ENCODE measurements at regions of chr13 and their contacts with region 1.

Region 1: GRCh38 chr13:94674609-94675348 is 37.6 kb downstream of the SOX21 start:
- DNase-seq: peak in 3 of 5 donors; percentile 9 to 27 (median 22)
- ATAC-seq: no peak
- H3K4me3 ChIP-seq: no peak overlapping the region
- H3K27ac ChIP-seq: no peak overlapping the region
- H3K4me1 ChIP-seq: no peaks in the 10 kb centered on the region
- H3K27me3 ChIP-seq: peaks cover 0 to 29% (median 0%) of the 10 kb centered on the region in 9 donors
- CTCF ChIP-seq: peak; percentile 36 to 68 (median 58)
- POLR2A ChIP-seq: no peak

Region 2: DNA sequence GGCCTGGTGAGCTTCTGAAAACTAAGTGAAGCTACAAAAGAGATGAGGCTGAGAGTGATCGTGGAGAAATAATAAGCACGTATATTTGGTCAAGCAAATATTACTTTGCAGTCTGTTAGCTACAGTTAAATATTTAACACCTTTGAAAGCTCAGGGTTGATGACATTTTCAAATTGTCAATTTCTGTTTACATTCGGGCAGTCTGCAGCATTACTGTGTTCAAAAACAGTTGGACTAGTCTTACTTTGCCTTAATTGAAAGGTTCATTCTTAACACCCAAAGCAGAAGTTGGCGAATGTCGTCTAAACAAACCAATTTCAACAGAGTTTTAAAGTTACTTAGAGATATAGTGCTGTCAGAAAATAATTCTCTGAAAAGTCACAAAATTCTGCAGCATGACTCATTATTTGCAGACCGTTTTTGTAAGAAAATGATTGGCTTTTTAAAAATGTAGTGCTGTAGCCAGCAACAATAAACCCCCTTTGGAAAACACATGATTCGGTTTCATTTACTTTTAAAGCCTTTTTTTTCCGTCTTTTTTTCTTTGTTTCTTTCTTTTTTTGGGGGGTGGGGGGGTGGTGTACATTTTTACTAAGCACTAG is 899.2 kb before region 1 on chr13:
- intact Hi-C with region 1: no loop called
- DNase-seq: no peak
- ATAC-seq: no peak
- H3K4me3 ChIP-seq: no peak overlapping the region
- H3K27ac ChIP-seq: peak overlapping the region in 2 of 12 donors; percentile 35 to 40
- H3K4me1 ChIP-seq: peaks cover 0 to 2% (median 0%) of the 10 kb centered on the region in 12 donors
- H3K27me3 ChIP-seq: no peaks in the 10 kb centered on the region
- CTCF ChIP-seq: no peak
- POLR2A ChIP-seq: no peak

Region 3: DNA sequence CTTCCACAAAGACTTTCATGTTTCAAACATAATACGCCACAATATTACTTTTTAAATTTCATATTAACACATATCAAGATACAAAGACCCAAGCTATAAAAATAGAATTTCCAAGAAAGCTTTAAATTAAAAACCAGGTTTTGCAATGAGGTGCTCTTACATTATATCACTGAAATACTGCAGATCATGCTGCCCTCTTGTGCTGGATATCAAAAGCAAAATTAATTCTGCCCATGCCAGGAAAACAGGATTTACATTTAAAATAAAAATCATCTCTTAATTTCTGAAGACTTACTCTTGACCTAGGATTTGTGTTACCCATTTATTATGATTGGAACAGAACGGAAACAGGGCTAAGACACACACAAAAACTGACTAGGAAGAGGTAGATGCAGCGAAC is 481.4 kb after region 1 on chr13:
- intact Hi-C with region 1: loop called in 4 of 10 experiments (anchors 5 to 10 kb)
- DNase-seq: no peak
- ATAC-seq: no peak
- H3K4me3 ChIP-seq: no peak overlapping the region
- H3K27ac ChIP-seq: no peak overlapping the region
- H3K4me1 ChIP-seq: peaks cover 0 to 12% (median 0%) of the 10 kb centered on the region in 12 donors
- H3K27me3 ChIP-seq: no peaks in the 10 kb centered on the region
- CTCF ChIP-seq: peak in 5 of 12 donors; percentile 4 to 32 (median 29)
- POLR2A ChIP-seq: no peak

Region 4: DNA sequence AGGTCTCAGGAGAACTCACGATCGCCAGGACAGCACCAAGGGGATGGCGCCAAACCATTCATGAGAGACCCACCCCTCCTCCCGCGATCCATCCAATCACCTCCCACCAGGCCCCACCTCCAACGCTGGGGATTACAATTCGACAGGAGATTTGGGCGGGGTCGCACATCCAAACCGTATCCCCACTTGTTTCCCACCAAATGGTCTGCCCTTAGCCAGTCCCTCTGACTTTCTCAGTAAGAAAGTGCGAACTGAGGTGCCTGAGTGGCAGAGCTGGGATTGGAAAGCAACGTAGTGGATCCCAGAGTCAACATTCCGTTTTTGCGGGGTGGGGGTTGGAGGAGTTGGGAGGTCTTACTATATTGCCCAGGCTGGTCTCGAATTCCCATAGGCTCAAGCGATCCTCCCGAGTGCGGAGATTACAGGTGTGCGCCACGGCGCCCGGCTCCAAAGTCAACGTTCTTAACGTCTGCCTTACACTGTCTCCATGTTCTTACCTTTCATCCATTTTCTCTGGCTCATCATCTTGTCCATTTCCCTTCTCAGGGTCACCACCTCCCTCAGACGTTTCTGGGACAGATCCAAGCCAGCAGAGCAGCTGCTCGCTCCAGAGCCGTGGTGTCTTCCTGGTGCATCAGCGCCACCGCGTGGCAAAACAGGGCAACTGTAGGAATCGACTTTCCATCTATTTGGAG is 729.2 kb after region 1 on chr13:
- intact Hi-C with region 1: loop called in 3 of 10 experiments (anchors 10 kb)
- DNase-seq: peak; percentile 81 to 90 (median 82)
- ATAC-seq: peak; percentile 72 to 96 (median 94)
- H3K4me3 ChIP-seq: peak overlapping the region in 10 of 12 donors; percentile 25 to 54 (median 44)
- H3K27ac ChIP-seq: no peak overlapping the region
- H3K4me1 ChIP-seq: peaks cover 0 to 8% (median 5%) of the 10 kb centered on the region in 12 donors
- H3K27me3 ChIP-seq: peaks cover 0 to 4% (median 0%) of the 10 kb centered on the region in 9 donors
- CTCF ChIP-seq: peak; percentile 89 to 97 (median 93)
- POLR2A ChIP-seq: no peak